Activated CD4-positive, alpha-beta T cell treated with anti-CD3 and anti-CD28 coated beads for 36 hours (primary cell): ENCODE measurements at regions of chr6 and their contacts with region 1.

Region 1: DNA sequence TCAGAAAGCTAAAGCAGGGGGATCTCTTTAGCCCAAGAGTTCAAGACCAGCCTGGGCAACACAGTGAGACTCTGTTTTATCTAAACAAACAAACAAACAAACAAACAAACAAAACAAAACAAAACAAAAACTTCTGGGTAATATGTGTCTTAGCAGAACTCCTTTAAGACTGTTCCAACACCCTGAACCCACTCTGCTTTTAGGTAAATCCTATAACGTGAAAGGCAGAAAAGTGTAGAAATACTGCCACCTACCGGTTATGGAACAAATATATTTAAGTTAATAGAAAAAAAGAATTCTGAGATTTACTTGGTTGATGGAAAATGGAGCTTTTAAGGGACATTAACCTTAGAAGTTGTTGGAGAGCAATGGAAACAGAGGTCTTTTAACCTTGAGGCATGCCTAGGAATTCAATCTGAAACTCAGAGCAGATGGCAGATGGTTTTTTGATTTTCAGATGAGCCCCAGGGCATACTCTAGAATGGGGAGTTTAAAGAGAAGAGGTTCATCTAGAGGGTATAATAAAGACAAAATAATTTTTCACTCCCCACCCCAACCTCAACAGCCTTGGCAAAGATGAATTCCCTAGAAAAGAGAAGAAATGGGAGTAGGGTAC is 38.5 kb downstream of the SOD2 start:
- DNase-seq: no peak
- ATAC-seq: no peak
- H3K4me3 Mint-ChIP-seq: no peak overlapping the region
- H3K27ac Mint-ChIP-seq: no peak overlapping the region
- H3K4me1 Mint-ChIP-seq: no peaks in the 10 kb centered on the region
- H3K27me3 Mint-ChIP-seq: no peaks in the 10 kb centered on the region

Region 2: DNA sequence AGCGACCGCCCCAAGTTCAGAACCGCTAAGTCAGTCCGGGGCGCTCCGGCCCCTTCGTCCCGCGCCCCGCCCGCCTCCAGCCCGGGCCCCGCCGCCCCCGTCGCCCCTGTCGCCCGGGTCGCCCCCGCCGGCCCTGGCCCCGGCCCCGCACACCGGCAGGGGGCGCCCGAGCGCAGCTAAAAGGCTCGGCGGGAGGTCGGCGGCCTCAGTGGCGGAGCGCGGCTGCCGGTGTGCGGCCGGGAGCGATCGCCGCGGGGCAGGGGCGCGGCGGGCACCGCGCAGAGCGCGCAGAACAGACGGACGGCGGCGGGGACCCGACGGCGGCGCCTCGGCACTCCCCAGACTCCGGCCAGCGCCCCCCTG is 485.4 kb before region 1 on chr6 and contains the start of gene FNDC1:
- CTCF ChIA-PET with region 1: interaction called, 44 read pairs
- POLR2A ChIA-PET with region 1: no interaction called
- intact Hi-C with region 1: loop called (anchors 1 kb)
- DNase-seq: peak; percentile 82
- ATAC-seq: peak; percentile 87
- H3K4me3 Mint-ChIP-seq: peak within 1 kb of the TSS; percentile 60
- H3K27ac Mint-ChIP-seq: no peak within 1 kb of the TSS
- H3K4me1 Mint-ChIP-seq: peaks cover 16% of the 10 kb centered on the region
- H3K27me3 Mint-ChIP-seq: peaks cover 80% of the 10 kb centered on the region
- total RNA-seq, gene FNDC1: not detected

Region 3: GRCh38 chr6:159252955-159253508 is 401.6 kb before region 1 on chr6:
- CTCF ChIA-PET with region 1: interaction called, 15 read pairs
- POLR2A ChIA-PET with region 1: no interaction called
- intact Hi-C with region 1: loop called in 1 of 2 experiments (anchors 2 kb)
- DNase-seq: peak; percentile 14
- ATAC-seq: peak; percentile 53
- H3K4me3 Mint-ChIP-seq: no peak overlapping the region
- H3K27ac Mint-ChIP-seq: no peak overlapping the region
- H3K4me1 Mint-ChIP-seq: no peaks in the 10 kb centered on the region
- H3K27me3 Mint-ChIP-seq: peaks cover 11% of the 10 kb centered on the region

Region 4: DNA sequence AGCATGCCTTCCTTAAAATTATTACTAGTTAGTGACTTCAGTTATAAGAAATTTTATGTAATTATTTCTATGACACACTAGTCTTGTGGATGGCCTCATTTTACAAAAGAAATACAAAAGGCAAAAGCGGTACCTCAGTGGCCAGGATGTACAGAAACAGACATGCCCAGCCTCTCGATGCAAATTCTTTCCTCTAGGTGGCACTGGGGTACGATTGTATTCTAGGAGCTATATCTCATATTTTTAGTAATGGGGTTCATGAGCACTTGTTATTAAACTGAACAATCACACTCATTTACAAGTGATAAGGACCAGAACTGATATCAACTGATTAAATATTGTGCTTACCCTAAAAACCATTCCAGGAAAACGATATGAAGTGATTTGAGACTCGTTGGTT is 21.4 kb before region 1 on chr6:
- CTCF ChIA-PET with region 1: interaction called, 17 read pairs
- POLR2A ChIA-PET with region 1: no interaction called
- intact Hi-C with region 1: no loop called
- DNase-seq: peak; percentile 11
- ATAC-seq: no peak
- H3K4me3 Mint-ChIP-seq: no peak overlapping the region
- H3K27ac Mint-ChIP-seq: no peak overlapping the region
- H3K4me1 Mint-ChIP-seq: no peaks in the 10 kb centered on the region
- H3K27me3 Mint-ChIP-seq: no peaks in the 10 kb centered on the region

Region 5: DNA sequence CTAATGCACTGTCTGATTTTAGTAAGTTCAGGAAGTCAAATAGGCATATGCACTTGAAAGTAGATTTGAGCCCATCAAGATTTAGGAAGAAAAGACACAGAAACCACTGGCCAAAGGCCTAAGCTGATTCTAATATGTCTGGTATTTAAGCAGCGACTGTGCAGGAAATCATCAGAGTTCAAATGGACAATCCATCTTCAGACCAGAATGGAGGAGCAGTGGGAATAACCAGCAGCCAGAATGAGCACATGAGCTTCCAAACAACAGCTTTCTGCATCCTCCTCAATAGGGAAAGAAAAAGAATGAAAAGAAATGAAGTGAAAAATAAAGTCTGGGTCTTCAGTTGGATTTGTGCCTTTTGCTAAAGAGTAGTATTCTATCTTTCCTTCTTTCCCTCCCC is 12.1 kb before region 1 on chr6:
- CTCF ChIA-PET with region 1: interaction called, 10 read pairs
- POLR2A ChIA-PET with region 1: no interaction called
- intact Hi-C with region 1: no loop called
- DNase-seq: no peak
- ATAC-seq: no peak
- H3K4me3 Mint-ChIP-seq: no peak overlapping the region
- H3K27ac Mint-ChIP-seq: no peak overlapping the region
- H3K4me1 Mint-ChIP-seq: no peaks in the 10 kb centered on the region
- H3K27me3 Mint-ChIP-seq: no peaks in the 10 kb centered on the region